Endothelial cell of umbilical vein (primary cell): ENCODE measurements at regions of chr11 and their contacts with region 1.

Region 1: GRCh38 chr11:12888525-12889158 is 120.5 kb upstream of the RASSF10 start:
- DNase-seq: peak; percentile 96
- H3K4me3 ChIP-seq: no peak overlapping the region
- H3K27ac ChIP-seq: no peak overlapping the region
- H3K4me1 ChIP-seq: peaks cover 9% of the 10 kb centered on the region
- H3K27me3 ChIP-seq: no peaks in the 10 kb centered on the region
- CTCF ChIP-seq: peak; percentile 82 to 86
- POLR2A ChIP-seq: no peak

Region 2: DNA sequence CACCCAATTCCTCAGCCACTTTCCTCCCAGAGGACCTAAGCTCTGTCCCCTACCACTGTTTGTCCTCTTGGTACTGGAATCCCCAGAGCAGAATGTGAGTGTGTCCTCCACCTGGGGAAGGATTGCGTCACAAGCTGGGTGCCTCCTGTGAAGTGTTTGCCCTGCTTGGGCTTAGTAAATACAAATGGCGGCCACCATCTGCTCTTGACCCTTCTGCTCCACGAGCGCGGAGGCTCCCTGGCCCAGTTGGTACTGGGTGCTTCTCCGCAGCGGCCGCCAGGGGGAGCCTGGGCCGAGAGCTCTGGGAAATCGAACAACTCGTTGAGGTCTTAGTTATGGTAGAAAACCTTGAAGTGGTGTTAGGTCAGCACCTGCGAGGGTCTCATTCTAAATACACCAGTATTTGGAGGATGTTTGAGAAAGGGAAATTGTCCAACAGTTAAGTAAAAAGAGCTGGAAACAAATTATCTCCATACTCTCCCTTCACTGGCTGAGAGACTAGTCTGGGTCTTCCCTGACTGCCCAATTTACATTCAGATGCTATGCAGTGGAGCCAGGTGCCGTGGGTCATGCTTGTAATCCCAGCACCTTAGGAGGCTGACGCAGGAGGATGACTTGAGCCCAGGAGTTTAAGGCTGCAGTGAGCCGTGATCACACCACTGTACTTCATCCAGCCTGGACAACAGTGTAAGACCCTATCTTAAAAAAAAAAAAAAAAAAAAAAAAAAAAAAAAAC is 289.1 kb before region 1 on chr11:
- CTCF ChIA-PET with region 1: interaction called, 53 read pairs
- POLR2A ChIA-PET with region 1: no interaction called
- dilution Hi-C with region 1: no loop called
- intact Hi-C with region 1: loop called (anchors 1 kb)
- DNase-seq: peak; percentile 18
- H3K4me3 ChIP-seq: no peak overlapping the region
- H3K27ac ChIP-seq: no peak overlapping the region
- H3K4me1 ChIP-seq: peaks cover 7% of the 10 kb centered on the region
- H3K27me3 ChIP-seq: no peaks in the 10 kb centered on the region
- CTCF ChIP-seq: peak; percentile 76 to 77
- POLR2A ChIP-seq: no peak

Region 3: GRCh38 chr11:12761029-12761428 is 127.6 kb before region 1 on chr11:
- CTCF ChIA-PET with region 1: interaction called, 5 read pairs
- POLR2A ChIA-PET with region 1: no interaction called
- dilution Hi-C with region 1: no loop called
- intact Hi-C with region 1: loop called (anchors 5 kb)
- DNase-seq: peak; percentile 65
- H3K4me3 ChIP-seq: no peak overlapping the region
- H3K27ac ChIP-seq: peak overlapping the region; percentile 10
- H3K4me1 ChIP-seq: peaks cover 11% of the 10 kb centered on the region
- H3K27me3 ChIP-seq: no peaks in the 10 kb centered on the region
- CTCF ChIP-seq: peak; percentile 40 to 45
- POLR2A ChIP-seq: no peak

Region 4: DNA sequence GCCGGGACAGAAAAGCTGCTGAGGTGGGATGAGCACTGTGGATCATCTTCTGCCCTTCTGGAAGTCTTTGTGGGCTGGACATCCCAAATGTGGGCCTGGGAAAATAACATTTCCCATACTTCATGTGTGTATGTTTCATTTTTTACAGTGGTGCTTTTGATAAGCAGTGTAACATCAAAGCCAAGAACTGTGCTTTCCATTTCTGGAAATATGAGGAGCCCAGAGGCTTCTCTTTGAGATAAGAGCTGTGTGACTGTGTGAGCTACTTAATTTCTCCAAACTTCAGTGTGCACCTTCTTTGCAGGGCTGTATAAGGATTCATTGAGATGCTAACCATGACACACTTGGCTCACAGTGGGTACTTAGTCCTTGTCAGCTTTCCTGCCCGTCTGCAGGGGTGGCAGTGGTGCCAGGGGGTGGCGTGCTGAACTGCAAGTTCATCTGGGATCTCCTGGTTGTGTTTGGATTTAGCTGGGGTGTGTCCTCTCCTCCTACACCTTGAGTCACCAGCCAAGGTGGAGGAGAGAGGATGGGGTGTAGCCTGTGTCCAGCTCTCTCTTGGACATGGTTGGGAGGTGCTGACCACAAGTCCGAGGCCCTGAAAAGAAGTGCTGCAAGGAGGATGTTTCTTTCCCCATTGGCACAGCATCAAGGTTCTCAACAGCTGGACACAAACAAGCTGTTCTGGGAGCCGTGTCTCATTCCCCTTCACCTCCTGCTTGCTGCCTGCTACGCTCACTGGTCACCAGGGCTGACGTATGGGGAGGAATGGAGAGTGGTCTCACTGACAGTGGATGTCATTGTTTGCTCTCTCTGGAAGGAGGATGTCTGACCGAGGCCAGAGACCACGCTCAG is 75.0 kb before region 1 on chr11:
- CTCF ChIA-PET with region 1: interaction called, 22 read pairs
- POLR2A ChIA-PET with region 1: no interaction called
- dilution Hi-C with region 1: no loop called
- intact Hi-C with region 1: loop called (anchors 2 kb)
- DNase-seq: peak; percentile 17
- H3K4me3 ChIP-seq: no peak overlapping the region
- H3K27ac ChIP-seq: no peak overlapping the region
- H3K4me1 ChIP-seq: peaks cover 15% of the 10 kb centered on the region
- H3K27me3 ChIP-seq: no peaks in the 10 kb centered on the region
- CTCF ChIP-seq: no peak
- POLR2A ChIP-seq: no peak

Region 5: GRCh38 chr11:12841946-12842630 is 46.6 kb before region 1 on chr11:
- CTCF ChIA-PET with region 1: interaction called, 21 read pairs
- POLR2A ChIA-PET with region 1: no interaction called
- dilution Hi-C with region 1: no loop called
- intact Hi-C with region 1: loop called (anchors 2 kb)
- DNase-seq: peak; percentile 85
- H3K4me3 ChIP-seq: peak overlapping the region in 1 of 3 experiments; percentile 30
- H3K27ac ChIP-seq: peak overlapping the region; percentile 56
- H3K4me1 ChIP-seq: peaks cover 38% of the 10 kb centered on the region
- H3K27me3 ChIP-seq: no peaks in the 10 kb centered on the region
- CTCF ChIP-seq: no peak
- POLR2A ChIP-seq: no peak

Region 6: GRCh38 chr11:12876340-12876739 is 12.3 kb before region 1 on chr11:
- CTCF ChIA-PET with region 1: interaction called, 13 read pairs
- POLR2A ChIA-PET with region 1: no interaction called
- dilution Hi-C with region 1: no loop called
- intact Hi-C with region 1: no loop called
- DNase-seq: no peak
- H3K4me3 ChIP-seq: no peak overlapping the region
- H3K27ac ChIP-seq: no peak overlapping the region
- H3K4me1 ChIP-seq: no peaks in the 10 kb centered on the region
- H3K27me3 ChIP-seq: no peaks in the 10 kb centered on the region
- CTCF ChIP-seq: no peak
- POLR2A ChIP-seq: no peak

Region 7: GRCh38 chr11:13098063-13098462 is 209.4 kb after region 1 on chr11:
- CTCF ChIA-PET with region 1: no interaction called
- POLR2A ChIA-PET with region 1: no interaction called
- dilution Hi-C with region 1: no loop called
- intact Hi-C with region 1: no loop called
- DNase-seq: no peak
- H3K4me3 ChIP-seq: no peak overlapping the region
- H3K27ac ChIP-seq: no peak overlapping the region
- H3K4me1 ChIP-seq: peaks cover 10% of the 10 kb centered on the region
- H3K27me3 ChIP-seq: no peaks in the 10 kb centered on the region
- CTCF ChIP-seq: no peak
- POLR2A ChIP-seq: no peak